H1 (cell line): ENCODE measurements at regions of chr2 and their contacts with region 1.

Region 1: DNA sequence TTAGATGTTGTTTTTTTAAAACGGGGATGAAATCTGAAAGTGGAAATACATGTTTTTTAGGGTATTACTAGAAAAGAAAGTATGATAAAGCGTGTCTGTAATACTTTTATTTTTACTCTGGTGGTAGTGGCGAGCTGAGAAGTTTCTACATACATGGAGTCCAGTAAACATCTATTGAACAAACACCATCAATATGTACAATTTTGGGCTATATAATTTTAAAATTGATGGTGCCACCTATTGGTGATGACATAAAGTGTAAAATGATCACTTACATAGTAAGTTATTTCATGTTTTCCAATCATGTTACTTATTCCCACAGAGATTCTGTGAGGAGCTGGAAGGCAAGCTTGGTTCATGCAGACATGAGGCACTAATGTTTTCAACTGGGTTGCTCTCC is 31.5 kb upstream of the NFE2L2 start:
- DNase-seq: no peak
- H3K4me3 ChIP-seq: no peak overlapping the region
- H3K27ac ChIP-seq: no peak overlapping the region
- H3K4me1 ChIP-seq: no peaks in the 10 kb centered on the region
- H3K27me3 ChIP-seq: no peaks in the 10 kb centered on the region
- CTCF ChIP-seq: no peak
- EP300 ChIP-seq: no peak
- POLR2A ChIP-seq: no peak
- RAD21 ChIP-seq: no peak

Region 2: DNA sequence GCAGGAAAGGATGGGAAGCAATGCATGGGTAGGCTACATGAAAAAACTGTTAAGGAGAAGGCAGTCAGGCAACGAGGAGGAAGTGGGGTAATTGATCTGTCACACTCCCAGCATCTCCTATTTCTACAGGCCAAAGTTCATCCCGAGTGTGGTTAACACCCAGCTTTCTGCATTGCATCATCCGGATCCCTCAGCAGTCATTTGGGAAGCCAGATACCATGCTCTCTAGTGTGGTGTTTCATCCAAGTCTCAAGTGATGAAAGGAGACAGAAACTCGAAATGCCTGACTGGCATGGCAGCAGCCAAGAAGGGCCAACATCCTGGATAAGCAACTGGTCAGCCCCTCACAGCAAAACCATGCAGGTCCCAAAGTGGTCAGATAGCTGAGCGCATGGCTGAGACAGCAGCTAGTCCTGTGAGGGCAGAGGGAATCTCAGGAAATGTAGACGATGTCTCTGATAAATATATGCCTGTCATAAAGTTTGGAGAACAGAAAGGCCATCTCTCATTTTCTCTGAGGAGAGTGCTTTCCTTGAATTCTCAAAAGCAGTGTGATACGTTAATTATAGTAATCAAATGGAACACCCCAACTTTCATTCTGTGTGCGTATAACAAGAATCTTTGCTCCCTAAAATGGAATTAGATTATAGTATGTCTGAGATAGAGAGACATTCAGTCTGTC is 108.3 kb before region 1 on chr2:
- CTCF ChIA-PET with region 1: no interaction called
- POLR2A ChIA-PET with region 1: no interaction called
- DNase-seq: no peak
- H3K4me3 ChIP-seq: no peak overlapping the region
- H3K27ac ChIP-seq: no peak overlapping the region
- H3K4me1 ChIP-seq: 0 out of 7 replicates have a peak, but pooled peaks cover 0 to 2% (median 0%) of the 10 kb centered on the region in 4 experiments
- H3K27me3 ChIP-seq: no peaks in the 10 kb centered on the region
- CTCF ChIP-seq: no peak
- EP300 ChIP-seq: no peak
- POLR2A ChIP-seq: no peak
- RAD21 ChIP-seq: no peak

Region 3: GRCh38 chr2:177281400-177282180 is 14.4 kb before region 1 on chr2:
- CTCF ChIA-PET with region 1: interaction called, 24 read pairs
- POLR2A ChIA-PET with region 1: no interaction called
- DNase-seq: no peak
- H3K4me3 ChIP-seq: no peak overlapping the region; a peak in 1 of 8 replicates
- H3K27ac ChIP-seq: no peak overlapping the region
- H3K4me1 ChIP-seq: no peaks in the 10 kb centered on the region
- H3K27me3 ChIP-seq: no peaks in the 10 kb centered on the region
- CTCF ChIP-seq: no peak
- EP300 ChIP-seq: no peak
- POLR2A ChIP-seq: no peak
- RAD21 ChIP-seq: no peak

Region 4: DNA sequence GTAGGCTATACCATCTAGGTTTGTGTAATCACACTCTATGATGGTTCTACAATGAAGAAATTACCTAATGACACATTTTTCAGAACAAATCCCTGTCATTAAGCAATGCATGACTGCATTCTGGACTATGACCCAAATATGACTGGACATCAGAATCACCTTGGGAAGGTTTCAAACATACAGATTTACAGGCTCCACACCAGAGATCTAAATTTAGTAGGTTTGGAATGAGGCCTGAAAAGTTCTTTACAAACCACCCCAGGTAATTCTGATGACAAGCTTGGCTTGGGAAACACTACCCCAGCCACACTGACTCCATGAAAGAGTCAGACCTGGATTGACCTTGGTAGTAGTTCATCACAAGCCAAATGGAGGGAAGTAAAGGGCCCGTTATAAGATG is 20.7 kb after region 1 on chr2:
- CTCF ChIA-PET with region 1: no interaction called
- POLR2A ChIA-PET with region 1: no interaction called
- DNase-seq: no peak
- H3K4me3 ChIP-seq: no peak overlapping the region
- H3K27ac ChIP-seq: no peak overlapping the region
- H3K4me1 ChIP-seq: peaks cover 0 to 5% (median 2%) of the 10 kb centered on the region in 4 experiments; a peak in 3 of 7 replicates
- H3K27me3 ChIP-seq: no peaks in the 10 kb centered on the region
- CTCF ChIP-seq: no peak
- EP300 ChIP-seq: no peak
- POLR2A ChIP-seq: no peak
- RAD21 ChIP-seq: no peak